ENCODE measurements at regions of chr5 and their contacts with region 1.

Region 1: DNA sequence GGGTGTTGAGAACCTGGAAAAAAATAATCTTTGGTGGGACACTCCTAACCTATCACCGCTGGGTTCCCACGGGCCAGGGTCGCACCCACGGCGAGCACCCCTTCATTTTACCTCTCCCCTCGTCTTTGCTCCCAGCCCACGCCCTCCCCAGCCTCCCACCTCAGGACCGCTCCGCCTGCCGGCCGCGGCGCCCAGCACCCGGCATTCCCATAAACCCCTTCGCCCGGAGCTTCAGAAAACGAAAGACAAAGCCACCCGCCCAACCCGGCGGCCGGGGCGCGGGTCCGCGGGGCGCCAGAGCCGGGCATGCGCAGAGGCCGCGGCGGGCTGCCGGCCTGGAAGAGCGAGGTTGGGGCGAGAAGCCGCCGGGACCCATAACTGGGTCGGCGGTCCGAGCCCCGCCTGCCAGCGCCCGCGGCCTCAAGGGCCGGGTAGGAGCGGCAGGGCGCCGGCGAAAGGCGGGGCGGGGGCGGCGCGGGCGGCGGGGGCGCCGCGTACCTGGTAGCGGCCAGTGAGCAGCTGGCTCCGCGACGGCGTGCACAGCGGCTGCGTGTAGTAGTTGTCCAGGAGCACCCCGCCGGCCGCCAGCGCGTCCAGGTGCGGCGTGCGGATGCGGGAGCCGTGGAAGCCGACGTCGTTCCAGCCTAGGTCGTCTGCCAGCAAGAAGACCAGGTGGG is 533 bp downstream of the ARSB start:
- DNase-seq: peak; percentile 76 to 88
- ATAC-seq: peak; percentile 70 to 79 (median 76)
- H3K4me3 ChIP-seq: peak overlapping the region; percentile 68
- H3K4me3 Mint-ChIP-seq: peak overlapping the region; percentile 92
- H3K27ac ChIP-seq: peak overlapping the region; percentile 85
- H3K27ac Mint-ChIP-seq: peak overlapping the region; percentile 94 to 95
- H3K4me1 ChIP-seq: peaks cover 13% of the 10 kb centered on the region
- H3K4me1 Mint-ChIP-seq: peaks cover 25% of the 10 kb centered on the region in 2 donors
- H3K27me3 ChIP-seq: no peaks in the 10 kb centered on the region
- H3K27me3 Mint-ChIP-seq: no peaks in the 10 kb centered on the region
- CTCF ChIP-seq: no peak

Region 2: DNA sequence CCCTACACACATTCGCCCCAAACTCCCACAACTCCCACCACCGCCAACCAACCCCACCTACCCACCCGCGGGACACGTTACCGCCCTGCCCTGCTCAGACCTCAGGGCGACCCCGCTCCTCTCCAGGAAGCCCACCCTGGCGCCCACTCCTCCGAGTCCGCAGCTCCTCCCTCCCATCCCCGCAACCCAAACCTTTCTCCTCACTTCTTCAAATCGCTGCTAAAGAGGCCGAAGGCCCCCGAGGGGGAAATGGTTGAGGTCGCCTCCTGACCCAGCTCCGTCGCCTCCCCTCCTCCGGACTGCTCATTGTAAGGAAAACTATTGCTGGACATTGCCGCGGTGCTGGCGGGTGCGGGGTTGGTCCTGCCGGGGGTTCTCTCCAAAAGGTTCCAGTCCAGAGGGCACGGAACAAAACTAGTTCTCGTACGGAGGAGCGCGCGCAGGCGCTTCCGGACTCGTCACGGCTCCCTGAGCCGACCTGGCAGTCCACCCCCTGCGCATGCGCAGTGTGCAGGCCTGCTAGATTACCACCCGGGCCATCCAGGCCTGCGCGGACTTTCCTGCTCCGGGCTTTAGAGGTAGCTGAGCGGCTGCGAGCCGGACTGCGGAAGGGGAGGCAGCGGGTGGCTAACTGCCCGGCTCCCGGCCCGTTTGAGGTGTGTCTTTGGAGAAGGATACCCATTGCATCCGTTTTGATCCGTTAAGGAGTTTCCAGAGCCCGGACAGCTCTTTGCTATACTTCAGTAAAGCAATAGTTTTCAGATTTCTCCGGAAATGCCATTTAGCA is 690.1 kb before region 1 on chr5 and contains the start of gene AP3B1:
- intact Hi-C with region 1: loop called (anchors 10 kb)
- DNase-seq: peak; percentile 98 to 99
- ATAC-seq: peak; percentile 92 to 99 (median 96)
- H3K4me3 ChIP-seq: peak within 1 kb of the TSS; percentile 100
- H3K4me3 Mint-ChIP-seq: peak within 1 kb of the TSS; percentile 100
- H3K27ac ChIP-seq: peak within 1 kb of the TSS; percentile 99
- H3K27ac Mint-ChIP-seq: peak within 1 kb of the TSS; percentile 99
- H3K4me1 ChIP-seq: peaks cover 13% of the 10 kb centered on the region
- H3K4me1 Mint-ChIP-seq: peaks cover 52% of the 10 kb centered on the region in 2 donors
- H3K27me3 ChIP-seq: no peaks in the 10 kb centered on the region
- H3K27me3 Mint-ChIP-seq: no peaks in the 10 kb centered on the region
- CTCF ChIP-seq: no peak
- total RNA-seq, gene AP3B1: 48.5 to 58.2 (median 56.2) TPM

Region 3: DNA sequence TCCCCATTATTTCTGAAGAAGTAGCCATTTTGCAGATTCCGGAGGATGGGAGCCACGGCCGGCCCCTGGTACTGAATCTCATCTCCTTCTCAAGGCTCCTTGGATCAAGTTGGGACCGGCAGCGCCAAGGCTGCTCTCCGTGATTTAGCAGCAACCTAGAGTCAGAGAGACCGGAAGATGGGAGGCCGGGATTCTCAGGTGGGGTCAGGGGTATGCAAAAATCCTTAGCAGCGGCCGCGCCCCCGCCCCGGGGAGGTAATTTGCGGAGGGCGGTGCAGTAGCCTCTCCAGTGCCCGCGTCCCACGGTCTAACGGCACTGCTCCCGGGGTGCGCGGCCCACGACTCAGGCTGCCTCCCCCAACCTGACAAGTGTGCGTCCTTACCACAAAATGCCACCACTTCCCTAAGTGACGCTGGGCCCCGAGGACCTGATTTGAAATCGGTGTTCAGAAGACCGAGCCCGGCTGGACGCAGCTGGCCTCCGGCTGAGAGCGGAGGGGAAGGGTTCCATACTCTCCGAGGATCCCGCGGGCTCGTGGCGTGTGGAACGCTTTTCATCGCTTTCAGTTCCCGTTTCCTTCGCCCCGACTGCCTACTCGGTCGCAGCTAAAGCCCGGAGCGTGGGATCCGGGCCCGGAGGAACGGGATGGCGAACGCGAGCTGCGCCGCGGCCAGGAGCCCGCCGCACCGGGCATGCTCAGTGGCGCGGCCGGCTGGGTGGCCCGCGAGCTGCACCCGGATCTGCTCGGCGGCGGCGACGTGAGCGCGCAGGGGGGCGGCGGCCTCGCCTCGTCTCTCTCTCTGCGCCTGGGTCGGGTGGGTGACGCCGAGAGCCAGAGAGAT is 624.5 kb before region 1 on chr5 and contains the start of gene SCAMP1:
- intact Hi-C with region 1: loop called (anchors 10 kb)
- DNase-seq: peak; percentile 95 to 96
- ATAC-seq: peak; percentile 83 to 94 (median 88)
- H3K4me3 ChIP-seq: peak within 1 kb of the TSS; percentile 99
- H3K4me3 Mint-ChIP-seq: peak within 1 kb of the TSS; percentile 98
- H3K27ac ChIP-seq: peak within 1 kb of the TSS; percentile 96
- H3K27ac Mint-ChIP-seq: peak within 1 kb of the TSS; percentile 90 to 96
- H3K4me1 ChIP-seq: peaks cover 20% of the 10 kb centered on the region
- H3K4me1 Mint-ChIP-seq: peaks cover 45 to 58% of the 10 kb centered on the region in 2 donors
- H3K27me3 ChIP-seq: no peaks in the 10 kb centered on the region
- H3K27me3 Mint-ChIP-seq: no peaks in the 10 kb centered on the region
- CTCF ChIP-seq: no peak
- total RNA-seq, gene SCAMP1: 19.9 to 27.1 (median 20.5) TPM

Region 4: DNA sequence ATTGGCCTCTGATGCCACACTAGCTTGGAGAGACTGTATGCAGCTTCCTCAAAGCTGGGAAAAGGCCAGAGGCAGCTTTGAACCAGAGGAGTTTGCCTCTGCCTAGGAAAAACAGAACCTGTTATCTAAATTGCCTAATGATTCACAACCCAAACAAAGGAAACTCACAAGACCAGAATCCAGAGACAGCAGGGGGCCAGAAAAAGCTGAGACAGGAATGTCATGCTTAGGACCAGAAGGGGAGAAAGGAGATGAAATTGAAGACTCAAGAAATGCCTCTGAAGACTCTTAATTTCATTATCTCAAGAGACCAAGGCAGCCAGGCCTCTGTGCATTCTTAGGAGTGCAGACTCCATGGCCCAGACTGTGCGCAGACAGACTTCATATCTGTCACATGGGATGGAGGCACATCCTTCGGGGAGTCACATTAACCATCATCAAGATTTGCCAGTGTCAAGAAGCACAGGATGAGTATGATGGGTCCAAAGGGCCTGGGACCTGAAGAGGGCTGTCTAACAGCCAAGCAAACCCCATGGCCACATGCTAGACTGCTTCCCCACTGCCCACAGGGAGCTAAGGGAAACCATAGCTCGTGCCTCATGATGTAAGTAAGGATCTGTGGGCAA is 56.8 kb before region 1 on chr5:
- intact Hi-C with region 1: no loop called
- DNase-seq: no peak
- ATAC-seq: no peak
- H3K4me3 ChIP-seq: no peak overlapping the region
- H3K4me3 Mint-ChIP-seq: no peak overlapping the region
- H3K27ac ChIP-seq: no peak overlapping the region
- H3K27ac Mint-ChIP-seq: no peak overlapping the region
- H3K4me1 ChIP-seq: no peaks in the 10 kb centered on the region
- H3K4me1 Mint-ChIP-seq: no peaks in the 10 kb centered on the region
- H3K27me3 ChIP-seq: no peaks in the 10 kb centered on the region
- H3K27me3 Mint-ChIP-seq: no peaks in the 10 kb centered on the region
- CTCF ChIP-seq: no peak